Activated naive CD4-positive, alpha-beta T cell treated with anti-CD3 and anti-CD28 coated beads, Interleukin-2, amount 10 ng/mL, durations not matched to agents 7 days and 5 days (primary cell): ENCODE measurements at regions of chr15 and their contacts with region 1.

Region 1: DNA sequence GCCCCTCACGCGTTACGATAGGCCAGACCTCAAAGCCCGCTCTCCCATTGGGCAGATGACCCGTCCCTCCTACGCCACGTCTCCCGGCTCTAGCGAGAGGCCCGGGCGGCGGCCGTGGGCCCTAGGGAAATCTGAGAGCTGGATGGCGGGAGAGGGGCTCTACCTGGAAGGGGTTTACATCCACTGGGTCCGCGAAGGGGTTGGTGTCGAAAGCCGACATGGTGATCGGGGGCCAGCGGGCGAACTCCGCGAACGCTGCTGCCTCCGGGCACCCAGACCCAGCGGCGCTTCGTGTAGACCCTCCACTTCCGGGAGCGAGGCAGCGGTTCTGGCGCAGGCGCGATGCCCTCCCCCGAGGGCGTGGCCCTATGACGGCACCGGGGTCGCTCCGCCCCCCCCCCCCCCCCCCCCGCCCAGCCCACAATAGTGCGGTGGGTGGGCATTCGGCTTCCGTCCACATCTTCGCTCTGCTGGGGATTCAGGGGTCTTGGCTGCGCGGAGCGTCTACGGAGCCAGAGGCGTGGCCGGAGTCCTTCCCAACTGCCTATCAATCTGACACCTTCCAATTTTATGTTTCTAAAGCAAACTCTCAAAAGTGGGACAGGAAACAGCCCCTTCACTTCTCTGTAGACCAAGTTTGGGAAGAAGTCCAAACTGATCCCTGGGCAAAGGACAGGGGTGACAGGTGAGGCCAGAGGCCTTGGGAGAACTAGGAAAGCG is at the start of gene SCAMP2:
- DNase-seq: peak; percentile 95
- H3K4me3 Mint-ChIP-seq: peak within 1 kb of the TSS; percentile 91
- H3K27ac Mint-ChIP-seq: peak within 1 kb of the TSS; percentile 94
- H3K4me1 Mint-ChIP-seq: peaks cover 54% of the 10 kb centered on the region
- H3K27me3 Mint-ChIP-seq: peaks cover 10% of the 10 kb centered on the region

Region 2: GRCh38 chr15:74816808-74817674 is 56.2 kb before region 1 on chr15:
- CTCF ChIA-PET with region 1: no interaction called
- DNase-seq: no peak
- H3K4me3 Mint-ChIP-seq: no peak overlapping the region
- H3K27ac Mint-ChIP-seq: no peak overlapping the region
- H3K4me1 Mint-ChIP-seq: peaks cover 13% of the 10 kb centered on the region
- H3K27me3 Mint-ChIP-seq: peaks cover 30% of the 10 kb centered on the region

Region 3: DNA sequence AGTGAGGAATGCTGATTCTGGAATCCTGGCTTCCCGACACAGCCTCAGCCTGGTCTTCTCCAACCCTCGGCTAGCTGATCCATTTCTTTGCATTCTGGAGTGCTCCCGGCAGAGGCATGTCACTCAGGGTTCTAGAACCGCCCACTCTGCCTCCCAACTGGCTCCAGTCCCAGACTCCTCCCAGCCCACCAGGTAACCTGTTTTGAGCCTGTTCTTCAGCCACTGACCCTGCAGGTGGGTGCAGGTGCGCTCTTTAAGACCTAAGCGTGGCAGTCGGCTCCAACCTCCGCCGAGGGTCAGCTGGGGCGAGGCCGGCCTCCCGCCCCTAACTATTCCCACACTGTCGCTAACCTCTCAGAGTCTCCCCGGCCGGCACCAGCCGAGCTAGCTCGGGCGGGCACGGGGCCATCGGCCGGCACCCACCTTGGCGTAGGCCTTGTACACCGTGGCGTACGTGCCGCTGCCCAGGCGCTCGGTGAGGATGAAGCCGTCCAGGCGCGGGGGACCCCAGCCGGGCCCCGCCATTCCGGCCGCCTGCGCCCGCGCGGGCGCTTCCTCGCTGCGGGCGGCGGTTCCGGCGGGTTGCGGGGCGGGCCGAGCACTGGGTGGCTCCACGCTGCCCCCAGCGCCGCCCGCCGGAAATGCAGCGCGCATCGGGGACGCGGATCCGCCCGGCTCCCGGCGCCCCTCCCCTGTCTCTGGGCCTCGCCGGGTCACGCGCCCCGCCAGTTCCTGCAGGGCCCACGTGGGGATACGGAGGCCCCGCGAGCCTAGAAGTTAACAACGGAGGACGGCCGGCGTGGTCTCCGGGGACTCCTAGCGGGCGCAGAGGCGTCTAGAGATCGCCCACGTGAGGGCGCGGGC is 30.4 kb before region 1 on chr15 and contains the start of gene ULK3:
- CTCF ChIA-PET with region 1: interaction called, 10 read pairs
- DNase-seq: peak; percentile 95
- H3K4me3 Mint-ChIP-seq: peak within 1 kb of the TSS; percentile 95
- H3K27ac Mint-ChIP-seq: peak within 1 kb of the TSS; percentile 92
- H3K4me1 Mint-ChIP-seq: peaks cover 61% of the 10 kb centered on the region
- H3K27me3 Mint-ChIP-seq: no peaks in the 10 kb centered on the region

Region 4: GRCh38 chr15:74857082-74857655 is 16.0 kb before region 1 on chr15:
- CTCF ChIA-PET with region 1: interaction called, 14 read pairs
- DNase-seq: no peak
- H3K4me3 Mint-ChIP-seq: no peak overlapping the region
- H3K27ac Mint-ChIP-seq: peak overlapping the region; percentile 58
- H3K4me1 Mint-ChIP-seq: peaks cover 34% of the 10 kb centered on the region
- H3K27me3 Mint-ChIP-seq: no peaks in the 10 kb centered on the region